ENCODE measurements at regions of chr13 and their contacts with region 1.

Region 1: DNA sequence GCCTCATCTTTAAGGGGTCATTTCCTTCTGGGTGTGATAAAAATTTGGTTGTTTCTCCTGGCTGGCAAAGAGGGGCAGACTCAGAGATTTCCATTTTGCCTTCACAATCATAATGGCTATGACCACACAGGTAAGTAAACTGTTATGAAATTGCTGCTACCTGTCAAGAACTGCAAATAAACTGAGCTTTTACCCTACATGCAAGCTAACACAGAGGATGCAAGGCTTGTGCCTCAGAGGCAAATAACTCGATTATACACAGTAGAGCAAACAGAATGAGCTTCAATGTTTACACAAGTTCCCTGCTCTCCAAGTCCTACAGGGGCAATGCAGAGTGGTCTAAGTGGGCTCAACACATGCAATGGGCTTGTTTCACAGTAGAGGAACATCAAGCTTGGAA is 2466.1 kb downstream of the PCDH9 start:
- DNase-seq: no peak
- H3K4me3 ChIP-seq: no peak overlapping the region
- H3K27ac ChIP-seq: no peak overlapping the region
- H3K4me1 ChIP-seq: no peaks in the 10 kb centered on the region
- H3K27me3 ChIP-seq: peaks cover 6% of the 10 kb centered on the region
- CTCF ChIP-seq: no peak

Region 2: GRCh38 chr13:66237411-66238062 is 1473.5 kb after region 1 on chr13:
- CTCF ChIA-PET with region 1: no interaction called
- dilution Hi-C with region 1: no loop called
- in situ Hi-C with region 1: no loop called
- intact Hi-C with region 1: loop called (anchors 10 kb)
- DNase-seq: no peak
- H3K4me3 ChIP-seq: no peak overlapping the region
- H3K27ac ChIP-seq: no peak overlapping the region
- H3K4me1 ChIP-seq: no peaks in the 10 kb centered on the region
- H3K27me3 ChIP-seq: no peaks in the 10 kb centered on the region
- CTCF ChIP-seq: no peak